Mammary epithelial cell (primary cell): ENCODE measurements at regions of chr1 and their contacts with region 1.

Region 1: GRCh38 chr1:149962123-149962548 is 25.5 kb upstream of the MTMR11 start:
- DNase-seq: peak; percentile 65
- H3K4me3 ChIP-seq: no peak overlapping the region
- H3K27ac ChIP-seq: no peak overlapping the region
- H3K4me1 ChIP-seq: no peaks in the 10 kb centered on the region
- H3K27me3 ChIP-seq: no peaks in the 10 kb centered on the region
- CTCF ChIP-seq: peak; percentile 63 to 72

Region 2: GRCh38 chr1:149879556-149879955 is 82.6 kb before region 1 on chr1:
- CTCF ChIA-PET with region 1: no interaction called
- dilution Hi-C with region 1: no loop called
- in situ Hi-C with region 1: no loop called
- intact Hi-C with region 1: no loop called
- DNase-seq: no peak
- H3K4me3 ChIP-seq: no peak overlapping the region
- H3K27ac ChIP-seq: no peak overlapping the region
- H3K4me1 ChIP-seq: peaks cover 2% of the 10 kb centered on the region
- H3K27me3 ChIP-seq: no peaks in the 10 kb centered on the region
- CTCF ChIP-seq: no peak

Region 3: GRCh38 chr1:150010393-150011115 is 48.4 kb after region 1 on chr1 and contains the start of gene OTUD7B:
- CTCF ChIA-PET with region 1: no interaction called
- dilution Hi-C with region 1: no loop called
- in situ Hi-C with region 1: no loop called
- intact Hi-C with region 1: loop called (anchors 2 kb)
- DNase-seq: peak; percentile 88
- H3K4me3 ChIP-seq: peak within 1 kb of the TSS; percentile 96 to 98 (median 97)
- H3K27ac ChIP-seq: peak within 1 kb of the TSS; percentile 81
- H3K4me1 ChIP-seq: peaks cover 32% of the 10 kb centered on the region
- H3K27me3 ChIP-seq: no peaks in the 10 kb centered on the region
- CTCF ChIP-seq: no peak
- total RNA-seq, gene OTUD7B: 14.3 to 21.6 TPM

Region 4: GRCh38 chr1:150061632-150062101 is 99.5 kb after region 1 on chr1:
- CTCF ChIA-PET with region 1: interaction called, 4 read pairs
- dilution Hi-C with region 1: loop called (anchors 5 kb)
- in situ Hi-C with region 1: no loop called
- intact Hi-C with region 1: loop called (anchors 5 kb)
- DNase-seq: peak; percentile 85
- H3K4me3 ChIP-seq: no peak overlapping the region
- H3K27ac ChIP-seq: no peak overlapping the region
- H3K4me1 ChIP-seq: peaks cover 19% of the 10 kb centered on the region
- H3K27me3 ChIP-seq: no peaks in the 10 kb centered on the region
- CTCF ChIP-seq: no peak

Region 5: GRCh38 chr1:150162862-150163706 is 200.9 kb after region 1 on chr1:
- CTCF ChIA-PET with region 1: no interaction called
- dilution Hi-C with region 1: no loop called
- in situ Hi-C with region 1: no loop called
- intact Hi-C with region 1: loop called (anchors 1 kb)
- DNase-seq: peak; percentile 97
- H3K4me3 ChIP-seq: peak overlapping the region; percentile 11 to 31 (median 28)
- H3K27ac ChIP-seq: peak overlapping the region; percentile 71
- H3K4me1 ChIP-seq: peaks cover 14% of the 10 kb centered on the region
- H3K27me3 ChIP-seq: no peaks in the 10 kb centered on the region
- CTCF ChIP-seq: peak; percentile 0 to 24

Region 6: GRCh38 chr1:150186789-150187559 is 224.8 kb after region 1 on chr1:
- CTCF ChIA-PET with region 1: interaction called, 4 read pairs
- dilution Hi-C with region 1: no loop called
- in situ Hi-C with region 1: loop called (anchors 10 to 25 kb)
- intact Hi-C with region 1: loop called (anchors 2 kb)
- DNase-seq: peak; percentile 23
- H3K4me3 ChIP-seq: no peak overlapping the region
- H3K27ac ChIP-seq: no peak overlapping the region
- H3K4me1 ChIP-seq: peaks cover 4% of the 10 kb centered on the region
- H3K27me3 ChIP-seq: no peaks in the 10 kb centered on the region
- CTCF ChIP-seq: peak; percentile 29 to 57